Calu3 (cell line): ENCODE measurements at regions of chrX and their contacts with region 1.

Region 1: DNA sequence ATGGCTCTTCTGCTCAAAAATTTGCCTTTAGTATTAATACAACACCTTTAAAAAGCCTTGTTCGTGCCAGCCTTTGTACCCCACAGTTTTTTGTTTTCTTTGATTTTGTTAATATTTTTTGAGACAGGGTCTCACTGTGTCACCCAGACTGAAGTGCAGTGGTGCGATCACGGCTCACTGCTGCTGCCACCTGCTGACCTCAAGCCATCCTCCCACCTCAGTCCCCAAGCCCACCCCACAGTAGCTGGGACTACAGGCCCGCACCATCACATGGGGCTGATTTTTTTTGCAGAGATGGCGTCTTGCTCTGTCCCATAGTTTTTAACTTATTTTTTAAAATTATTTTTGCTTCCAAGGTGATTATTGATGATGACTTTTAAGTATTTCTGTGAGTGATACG is 134.0 kb downstream of the HTR2C start:
- DNase-seq: no peak
- H3K4me3 Mint-ChIP-seq: no peak overlapping the region
- H3K27ac Mint-ChIP-seq: no peak overlapping the region
- H3K4me1 Mint-ChIP-seq: no peaks in the 10 kb centered on the region
- H3K27me3 Mint-ChIP-seq: no peaks in the 10 kb centered on the region
- CTCF ChIP-seq: peak; percentile 21

Region 2: GRCh38 chrX:114626323-114626722 is 91.6 kb before region 1 on chrX:
- CTCF ChIA-PET with region 1: interaction called, 3 read pairs
- intact Hi-C with region 1: loop called (anchors 2 kb)
- DNase-seq: peak; percentile 10
- H3K4me3 Mint-ChIP-seq: no peak overlapping the region
- H3K27ac Mint-ChIP-seq: no peak overlapping the region
- H3K4me1 Mint-ChIP-seq: no peaks in the 10 kb centered on the region
- H3K27me3 Mint-ChIP-seq: no peaks in the 10 kb centered on the region
- CTCF ChIP-seq: peak; percentile 45